Activated CD4-positive, alpha-beta memory T cell treated with anti-CD3 and anti-CD28 coated beads, Interleukin-2, amount 10 ng/mL, durations not matched to agents 7 days and 5 days (primary cell): ENCODE measurements at regions of chr20 and their contacts with region 1.

Region 1: GRCh38 chr20:60057123-60057801 is 99.0 kb downstream of the CDH26 start:
- DNase-seq: peak; percentile 79
- H3K4me3 Mint-ChIP-seq: peak overlapping the region; percentile 84
- H3K27ac Mint-ChIP-seq: peak overlapping the region; percentile 88
- H3K4me1 Mint-ChIP-seq: peaks cover 62% of the 10 kb centered on the region
- H3K27me3 Mint-ChIP-seq: peaks cover 2% of the 10 kb centered on the region

Region 2: GRCh38 chr20:59810449-59811187 is 246.6 kb before region 1 on chr20:
- CTCF ChIA-PET with region 1: no interaction called
- POLR2A ChIA-PET with region 1: no interaction called
- DNase-seq: peak; percentile 2
- H3K4me3 Mint-ChIP-seq: no peak overlapping the region
- H3K27ac Mint-ChIP-seq: no peak overlapping the region
- H3K4me1 Mint-ChIP-seq: no peaks in the 10 kb centered on the region
- H3K27me3 Mint-ChIP-seq: no peaks in the 10 kb centered on the region

Region 3: DNA sequence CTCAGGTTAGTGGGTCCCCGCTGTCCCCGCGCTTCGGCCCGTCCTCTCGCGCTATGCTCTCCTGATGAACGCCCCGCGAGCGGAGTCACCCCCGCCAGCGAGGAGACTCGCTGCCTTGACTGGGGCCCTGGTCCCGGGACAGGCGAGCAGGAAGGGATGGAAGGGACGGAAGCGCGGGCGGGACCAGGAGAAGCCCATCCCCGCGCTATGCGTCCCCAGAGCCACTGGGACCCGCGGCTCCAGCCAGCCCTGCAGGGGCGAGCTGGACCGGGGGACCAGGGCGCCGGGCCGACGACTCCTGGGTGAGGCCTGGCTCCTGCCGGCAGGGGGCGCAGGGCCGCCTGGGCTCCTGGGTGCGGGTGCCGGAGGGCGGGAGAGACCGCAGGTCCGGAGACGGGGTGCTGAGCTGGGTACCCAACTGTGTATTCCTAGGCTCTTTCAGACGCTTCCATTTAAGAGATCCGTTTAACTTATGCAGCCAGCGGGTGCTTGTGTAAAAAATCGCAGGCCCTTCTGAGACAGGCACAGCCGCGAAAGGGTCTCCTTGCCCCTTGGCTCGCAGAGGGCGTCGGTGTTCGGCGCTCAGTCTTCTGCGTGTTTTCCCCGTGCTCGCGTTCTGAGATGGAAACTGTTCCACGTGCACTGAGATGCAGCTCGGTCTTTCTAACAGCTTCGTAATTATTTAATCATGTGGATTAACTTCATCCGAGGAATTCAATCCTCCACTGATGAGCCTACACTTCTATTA is 123.2 kb before region 1 on chr20:
- CTCF ChIA-PET with region 1: interaction called, 12 read pairs
- POLR2A ChIA-PET with region 1: interaction called, 40 read pairs
- DNase-seq: peak; percentile 78
- H3K4me3 Mint-ChIP-seq: peak overlapping the region; percentile 70
- H3K27ac Mint-ChIP-seq: no peak overlapping the region
- H3K4me1 Mint-ChIP-seq: peaks cover 28% of the 10 kb centered on the region
- H3K27me3 Mint-ChIP-seq: peaks cover 2% of the 10 kb centered on the region

Region 4: GRCh38 chr20:59948828-59949720 is 108.2 kb before region 1 on chr20:
- CTCF ChIA-PET with region 1: interaction called, 26 read pairs
- POLR2A ChIA-PET with region 1: interaction called, 6 read pairs
- DNase-seq: peak; percentile 39
- H3K4me3 Mint-ChIP-seq: peak overlapping the region; percentile 41
- H3K27ac Mint-ChIP-seq: peak overlapping the region; percentile 90
- H3K4me1 Mint-ChIP-seq: peaks cover 18% of the 10 kb centered on the region
- H3K27me3 Mint-ChIP-seq: no peaks in the 10 kb centered on the region

Region 5: GRCh38 chr20:60137629-60138245 is 80.5 kb after region 1 on chr20:
- CTCF ChIA-PET with region 1: interaction called, 11 read pairs
- POLR2A ChIA-PET with region 1: interaction called, 3 read pairs
- DNase-seq: peak; percentile 46
- H3K4me3 Mint-ChIP-seq: peak overlapping the region; percentile 18
- H3K27ac Mint-ChIP-seq: no peak overlapping the region
- H3K4me1 Mint-ChIP-seq: peaks cover 15% of the 10 kb centered on the region
- H3K27me3 Mint-ChIP-seq: no peaks in the 10 kb centered on the region

Region 6: GRCh38 chr20:61234008-61234802 is 1176.9 kb after region 1 on chr20:
- CTCF ChIA-PET with region 1: interaction called, 10 read pairs
- POLR2A ChIA-PET with region 1: no interaction called
- DNase-seq: no peak
- H3K4me3 Mint-ChIP-seq: no peak overlapping the region
- H3K27ac Mint-ChIP-seq: no peak overlapping the region
- H3K4me1 Mint-ChIP-seq: no peaks in the 10 kb centered on the region
- H3K27me3 Mint-ChIP-seq: no peaks in the 10 kb centered on the region